ENCODE measurements at regions of chr3 and their contacts with region 1.

Region 1: DNA sequence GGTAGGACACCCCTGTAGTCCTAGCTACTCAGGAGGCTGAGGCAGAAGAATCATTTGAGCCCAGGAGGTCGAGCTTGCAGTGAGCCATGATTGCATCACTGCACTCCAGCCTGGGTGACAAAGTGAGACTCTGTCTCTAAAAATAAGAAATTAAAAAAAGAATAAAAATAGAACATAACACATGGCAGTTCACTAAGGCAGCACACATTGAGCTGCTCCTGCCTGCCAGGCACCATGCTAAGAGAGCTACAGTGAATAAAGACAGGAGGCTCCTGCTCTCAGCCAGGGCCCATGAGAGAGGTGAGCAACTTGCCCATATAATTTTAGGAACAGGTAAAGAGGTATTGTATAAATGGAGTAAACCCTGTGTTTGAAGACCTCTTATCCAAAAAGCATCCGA is 54.3 kb downstream of the EBLN2 start:
- DNase-seq: no peak
- H3K4me3 ChIP-seq: no peak overlapping the region
- H3K27ac ChIP-seq: no peak overlapping the region
- H3K4me1 ChIP-seq: no peaks in the 10 kb centered on the region
- H3K27me3 ChIP-seq: no peaks in the 10 kb centered on the region
- CTCF ChIP-seq: no peak

Region 2: DNA sequence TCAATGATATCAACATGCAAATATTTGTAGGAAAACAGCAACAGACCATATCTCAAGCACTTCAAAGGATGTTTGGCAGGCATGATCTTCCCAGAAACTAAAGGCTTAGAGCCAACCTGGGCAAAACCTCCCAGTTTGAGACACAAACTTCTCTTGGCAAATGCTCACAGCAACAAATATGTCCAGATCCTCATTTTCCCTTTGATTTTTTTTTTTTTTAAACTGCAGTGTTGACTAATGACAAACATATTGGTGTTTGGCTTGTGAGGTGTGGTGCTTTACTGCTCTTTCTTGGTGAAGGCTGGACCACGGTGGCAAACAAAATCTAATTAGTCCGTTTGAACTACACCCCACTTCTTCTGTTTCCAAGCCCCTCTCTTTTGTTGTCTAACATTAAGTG is 32.9 kb after region 1 on chr3:
- dilution Hi-C with region 1: no loop called
- DNase-seq: no peak
- H3K4me3 ChIP-seq: no peak overlapping the region
- H3K27ac ChIP-seq: no peak overlapping the region
- H3K4me1 ChIP-seq: no peaks in the 10 kb centered on the region
- H3K27me3 ChIP-seq: no peaks in the 10 kb centered on the region
- CTCF ChIP-seq: no peak

Region 3: DNA sequence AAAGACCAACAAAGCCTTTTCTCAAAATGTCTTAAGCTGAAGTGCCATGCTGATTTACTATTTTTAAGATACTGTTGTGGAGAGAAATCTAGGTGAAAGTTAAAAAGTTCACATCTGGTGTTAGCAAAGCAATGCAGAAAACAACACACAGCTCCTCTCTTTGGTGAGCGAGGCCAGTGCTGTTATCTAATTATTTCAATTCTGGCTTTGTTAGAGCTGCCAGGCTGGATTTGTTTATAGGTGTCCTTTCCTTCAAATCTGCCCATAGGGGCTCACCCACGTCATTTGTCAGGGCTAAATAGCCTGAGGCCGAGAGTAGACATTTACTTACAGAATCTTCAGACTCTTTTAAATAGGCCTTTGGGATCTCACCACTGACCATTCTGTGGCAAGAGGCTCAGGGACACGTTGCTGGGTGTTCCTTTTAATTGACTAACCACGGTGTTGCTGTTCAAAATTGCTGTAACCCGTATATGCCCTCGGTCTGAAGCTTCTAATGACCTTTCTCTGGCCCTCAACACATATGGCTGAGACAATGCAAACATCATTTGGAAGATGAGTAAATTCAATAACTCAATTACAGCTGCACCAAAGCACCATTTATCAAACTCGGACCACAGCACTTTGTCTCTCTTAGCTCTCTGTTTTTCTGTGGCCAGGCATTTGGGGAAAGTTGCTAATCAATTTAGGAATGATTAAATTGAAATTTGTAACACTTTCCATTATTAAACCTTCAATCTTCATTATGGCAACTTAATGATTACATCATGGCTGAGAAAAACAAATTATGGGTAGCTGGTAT is 356.4 kb after region 1 on chr3:
- dilution Hi-C with region 1: loop called (anchors 10 kb)
- DNase-seq: no peak
- H3K4me3 ChIP-seq: no peak overlapping the region
- H3K27ac ChIP-seq: no peak overlapping the region
- H3K4me1 ChIP-seq: no peaks in the 10 kb centered on the region
- H3K27me3 ChIP-seq: no peaks in the 10 kb centered on the region
- CTCF ChIP-seq: no peak

Region 4: GRCh38 chr3:73661265-73661664 is 545.5 kb after region 1 on chr3:
- dilution Hi-C with region 1: no loop called
- DNase-seq: no peak
- H3K4me3 ChIP-seq: no peak overlapping the region
- H3K27ac ChIP-seq: no peak overlapping the region
- H3K4me1 ChIP-seq: no peaks in the 10 kb centered on the region
- H3K27me3 ChIP-seq: no peaks in the 10 kb centered on the region
- CTCF ChIP-seq: no peak